ENCODE measurements at regions of chr11 and their contacts with region 1.

Region 1: GRCh38 chr11:44936525-44936924 is 14.2 kb downstream of the TP53I11 start:
- DNase-seq: peak; percentile 88
- ATAC-seq: peak; percentile 94
- H3K4me3 ChIP-seq: no peak overlapping the region
- H3K4me3 Mint-ChIP-seq: no peak overlapping the region
- H3K27ac ChIP-seq: no peak overlapping the region
- H3K27ac Mint-ChIP-seq: no peak overlapping the region
- H3K4me1 ChIP-seq: peaks cover 14 to 35% of the 10 kb centered on the region in 2 donors
- H3K4me1 Mint-ChIP-seq: peaks cover 29% of the 10 kb centered on the region
- H3K27me3 ChIP-seq: no peaks in the 10 kb centered on the region
- H3K27me3 Mint-ChIP-seq: no peaks in the 10 kb centered on the region
- CTCF ChIP-seq: peak; percentile 92

Region 2: DNA sequence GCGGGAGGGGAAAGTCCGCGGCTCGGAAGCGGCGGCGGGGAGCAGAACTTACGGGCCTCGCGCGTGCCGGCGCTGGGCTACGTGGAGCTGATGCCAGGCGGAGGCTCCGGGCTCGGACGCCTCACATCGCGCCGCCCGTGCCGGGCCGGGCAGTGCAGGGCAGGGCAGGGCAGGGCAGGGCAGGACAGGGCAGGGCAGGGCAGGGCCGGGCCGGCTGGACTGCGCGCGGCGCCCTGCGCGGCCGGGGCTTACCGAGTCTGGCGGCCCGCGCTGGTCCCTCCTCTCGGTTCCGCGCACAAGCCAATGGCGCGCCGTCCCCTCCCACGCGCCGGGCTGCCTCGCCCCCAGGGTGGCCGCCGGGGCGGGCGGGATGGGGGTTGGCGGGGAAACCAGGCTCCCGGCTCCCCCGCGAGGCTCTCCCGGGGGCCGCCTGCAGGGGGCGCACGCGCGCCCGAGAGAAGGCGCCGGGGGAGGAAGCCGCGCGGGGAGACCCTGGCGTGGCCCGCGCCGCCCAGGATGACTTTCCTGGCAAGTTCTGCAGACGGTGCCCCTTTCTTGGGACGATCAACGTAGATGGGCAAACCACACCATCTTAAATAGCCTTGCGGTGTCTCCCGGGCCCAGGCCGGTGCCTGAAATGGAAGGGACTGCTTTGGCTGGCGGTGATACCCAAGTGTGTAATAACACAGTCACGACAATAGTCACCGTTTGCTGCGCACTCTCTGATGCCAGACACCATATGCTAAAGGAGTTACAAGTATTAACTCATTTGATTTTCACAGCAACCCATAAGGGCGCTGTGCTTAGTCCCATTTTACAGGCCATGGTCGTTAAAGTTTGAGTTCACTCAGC is 14.3 kb after region 1 on chr11 and contains the start of gene TP53I11:
- CTCF ChIA-PET with region 1: interaction called, 69 read pairs
- POLR2A ChIA-PET with region 1: no interaction called
- intact Hi-C with region 1: loop called (anchors 1 kb)
- DNase-seq: peak; percentile 84
- ATAC-seq: peak; percentile 76
- H3K4me3 ChIP-seq: peak within 1 kb of the TSS; percentile 51 to 97 (median 83)
- H3K4me3 Mint-ChIP-seq: peak within 1 kb of the TSS; percentile 89
- H3K27ac ChIP-seq: peak within 1 kb of the TSS; percentile 64 to 85
- H3K27ac Mint-ChIP-seq: peak within 1 kb of the TSS; percentile 78
- H3K4me1 ChIP-seq: peaks cover 13 to 31% of the 10 kb centered on the region in 2 donors
- H3K4me1 Mint-ChIP-seq: peaks cover 61% of the 10 kb centered on the region
- H3K27me3 ChIP-seq: no peaks in the 10 kb centered on the region
- H3K27me3 Mint-ChIP-seq: no peaks in the 10 kb centered on the region
- CTCF ChIP-seq: peak; percentile 80
- total RNA-seq, gene TP53I11: 229 and 240 TPM in 2 replicates

Region 3: GRCh38 chr11:44977476-44977984 is 41.0 kb after region 1 on chr11:
- CTCF ChIA-PET with region 1: interaction called, 14 read pairs
- POLR2A ChIA-PET with region 1: no interaction called
- intact Hi-C with region 1: loop called (anchors 2 kb)
- DNase-seq: no peak
- ATAC-seq: peak; percentile 35
- H3K4me3 ChIP-seq: no peak overlapping the region
- H3K4me3 Mint-ChIP-seq: peak overlapping the region; percentile 40
- H3K27ac ChIP-seq: no peak overlapping the region
- H3K27ac Mint-ChIP-seq: no peak overlapping the region
- H3K4me1 ChIP-seq: peaks cover 12 to 21% of the 10 kb centered on the region in 2 donors
- H3K4me1 Mint-ChIP-seq: peaks cover 11% of the 10 kb centered on the region
- H3K27me3 ChIP-seq: peaks cover 0 to 13% (median 2%) of the 10 kb centered on the region in 4 experiments
- H3K27me3 Mint-ChIP-seq: no peaks in the 10 kb centered on the region
- CTCF ChIP-seq: no peak

Region 4: DNA sequence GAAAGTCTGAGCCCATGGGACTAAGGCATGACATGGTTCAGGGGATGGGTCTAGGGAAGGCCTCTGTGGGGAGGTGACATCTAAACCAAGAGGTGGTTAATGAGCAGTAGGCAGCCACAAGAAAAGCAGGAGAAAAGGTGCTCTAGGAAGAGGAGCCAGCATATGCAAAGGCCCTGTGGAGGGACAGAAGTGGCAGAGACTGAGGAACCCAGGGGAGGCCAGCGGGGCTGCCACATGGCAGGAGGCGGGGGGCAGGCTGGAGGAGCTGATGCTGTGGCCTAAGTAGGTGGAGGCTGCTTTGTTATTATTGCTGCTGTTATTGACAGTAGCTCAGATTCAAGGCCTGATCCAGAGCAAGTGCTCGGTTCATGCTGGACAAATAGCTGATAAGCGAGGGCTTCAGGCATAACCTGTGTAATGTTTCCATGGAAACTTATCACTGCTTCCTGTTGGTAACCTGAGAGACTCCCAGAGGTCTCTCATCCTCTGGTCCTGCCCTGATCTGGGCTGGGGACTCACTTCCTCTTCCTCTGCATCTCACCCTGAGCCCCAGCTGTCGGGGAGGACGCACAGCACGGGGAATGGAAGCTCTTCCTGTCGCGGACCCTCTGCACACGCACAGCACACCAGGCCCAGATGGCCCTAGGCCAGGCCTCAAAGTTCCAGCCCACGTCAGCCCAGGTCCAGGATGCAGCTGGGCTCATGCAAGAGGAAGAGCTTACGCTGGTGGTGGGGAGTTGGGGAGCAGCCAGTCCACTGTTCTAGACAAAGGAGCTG is 89.4 kb after region 1 on chr11:
- CTCF ChIA-PET with region 1: interaction called, 86 read pairs
- POLR2A ChIA-PET with region 1: interaction called, 3 read pairs
- intact Hi-C with region 1: no loop called
- DNase-seq: peak; percentile 82
- ATAC-seq: peak; percentile 50
- H3K4me3 ChIP-seq: no peak overlapping the region
- H3K4me3 Mint-ChIP-seq: peak overlapping the region; percentile 51
- H3K27ac ChIP-seq: peak overlapping the region; percentile 72 to 79
- H3K27ac Mint-ChIP-seq: peak overlapping the region; percentile 96
- H3K4me1 ChIP-seq: peaks cover 46 to 58% of the 10 kb centered on the region in 2 donors
- H3K4me1 Mint-ChIP-seq: peaks cover 66% of the 10 kb centered on the region
- H3K27me3 ChIP-seq: peaks cover 0 to 2% (median 0%) of the 10 kb centered on the region in 4 experiments
- H3K27me3 Mint-ChIP-seq: no peaks in the 10 kb centered on the region
- CTCF ChIP-seq: no peak

Region 5: DNA sequence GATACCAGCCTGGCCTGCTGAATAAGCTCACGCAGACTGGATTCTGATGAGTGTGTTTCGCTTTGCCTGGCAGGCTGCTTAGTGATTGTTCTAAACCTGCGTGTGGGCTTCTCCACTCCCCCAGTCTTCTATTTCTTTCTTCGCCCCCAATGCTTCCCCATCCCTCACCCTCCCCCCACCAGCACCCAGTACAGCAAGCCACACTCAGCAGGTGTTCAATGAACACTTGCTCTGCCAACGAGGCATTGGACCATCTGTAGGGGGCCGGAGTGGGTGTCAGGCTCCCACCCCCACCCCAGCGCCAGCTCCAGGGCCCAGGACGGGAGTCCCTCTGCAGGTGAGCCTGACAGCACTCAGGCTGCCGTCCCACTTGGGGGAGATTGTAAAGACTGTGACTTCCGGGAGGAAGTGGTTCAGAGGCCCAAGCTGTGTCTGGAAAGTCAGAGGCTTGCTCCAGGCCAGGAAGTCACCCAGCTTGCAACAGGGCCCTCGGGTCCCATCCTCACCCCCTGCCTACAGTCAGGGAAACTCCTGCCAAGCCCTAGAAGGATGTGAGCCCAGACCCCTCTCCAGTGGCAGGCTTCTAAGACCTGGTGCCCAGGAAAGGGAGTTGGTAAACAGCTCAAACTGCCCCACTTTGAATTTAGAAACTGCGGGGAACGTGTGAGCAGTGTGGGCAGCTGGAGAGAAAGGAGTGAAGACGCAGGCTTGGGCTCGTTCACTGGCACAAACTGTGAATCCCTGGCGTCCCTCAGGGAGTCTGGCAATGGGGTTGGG is 143.6 kb after region 1 on chr11:
- CTCF ChIA-PET with region 1: interaction called, 41 read pairs
- POLR2A ChIA-PET with region 1: interaction called, 4 read pairs
- intact Hi-C with region 1: no loop called
- DNase-seq: peak; percentile 78
- ATAC-seq: peak; percentile 59
- H3K4me3 ChIP-seq: peak overlapping the region in 2 of 5 experiments; percentile 5 to 6
- H3K4me3 Mint-ChIP-seq: peak overlapping the region; percentile 71
- H3K27ac ChIP-seq: peak overlapping the region; percentile 65 to 73
- H3K27ac Mint-ChIP-seq: peak overlapping the region; percentile 93
- H3K4me1 ChIP-seq: peaks cover 52 to 65% of the 10 kb centered on the region in 2 donors
- H3K4me1 Mint-ChIP-seq: peaks cover 74% of the 10 kb centered on the region
- H3K27me3 ChIP-seq: no peaks in the 10 kb centered on the region
- H3K27me3 Mint-ChIP-seq: no peaks in the 10 kb centered on the region
- CTCF ChIP-seq: no peak

Region 6: GRCh38 chr11:45332276-45332934 is 395.9 kb after region 1 on chr11:
- CTCF ChIA-PET with region 1: interaction called, 7 read pairs
- POLR2A ChIA-PET with region 1: no interaction called
- intact Hi-C with region 1: loop called (anchors 2 kb)
- DNase-seq: peak; percentile 62
- ATAC-seq: peak; percentile 53
- H3K4me3 ChIP-seq: no peak overlapping the region
- H3K4me3 Mint-ChIP-seq: no peak overlapping the region
- H3K27ac ChIP-seq: no peak overlapping the region
- H3K27ac Mint-ChIP-seq: no peak overlapping the region
- H3K4me1 ChIP-seq: no peaks in the 10 kb centered on the region
- H3K4me1 Mint-ChIP-seq: peaks cover 6% of the 10 kb centered on the region
- H3K27me3 ChIP-seq: peaks cover 0 to 15% (median 0%) of the 10 kb centered on the region in 4 experiments
- H3K27me3 Mint-ChIP-seq: peaks cover 29% of the 10 kb centered on the region
- CTCF ChIP-seq: peak; percentile 95

Measured in B cell (primary cell).